B cell (primary cell): ENCODE measurements at regions of chr7 and their contacts with region 1.

Region 1: GRCh38 chr7:47720141-47720906 is 138.4 kb upstream of the TNS3 start:
- DNase-seq: peak; percentile 45
- ATAC-seq: peak; percentile 12
- H3K4me3 ChIP-seq: no peak overlapping the region
- H3K4me3 Mint-ChIP-seq: peak overlapping the region; percentile 64
- H3K27ac ChIP-seq: peak overlapping the region in 1 of 2 donors; percentile 28
- H3K27ac Mint-ChIP-seq: peak overlapping the region; percentile 87
- H3K4me1 ChIP-seq: peaks cover 57 to 63% of the 10 kb centered on the region in 2 donors
- H3K4me1 Mint-ChIP-seq: peaks cover 71% of the 10 kb centered on the region
- H3K27me3 ChIP-seq: no peaks in the 10 kb centered on the region
- H3K27me3 Mint-ChIP-seq: no peaks in the 10 kb centered on the region
- CTCF ChIP-seq: no peak

Region 2: DNA sequence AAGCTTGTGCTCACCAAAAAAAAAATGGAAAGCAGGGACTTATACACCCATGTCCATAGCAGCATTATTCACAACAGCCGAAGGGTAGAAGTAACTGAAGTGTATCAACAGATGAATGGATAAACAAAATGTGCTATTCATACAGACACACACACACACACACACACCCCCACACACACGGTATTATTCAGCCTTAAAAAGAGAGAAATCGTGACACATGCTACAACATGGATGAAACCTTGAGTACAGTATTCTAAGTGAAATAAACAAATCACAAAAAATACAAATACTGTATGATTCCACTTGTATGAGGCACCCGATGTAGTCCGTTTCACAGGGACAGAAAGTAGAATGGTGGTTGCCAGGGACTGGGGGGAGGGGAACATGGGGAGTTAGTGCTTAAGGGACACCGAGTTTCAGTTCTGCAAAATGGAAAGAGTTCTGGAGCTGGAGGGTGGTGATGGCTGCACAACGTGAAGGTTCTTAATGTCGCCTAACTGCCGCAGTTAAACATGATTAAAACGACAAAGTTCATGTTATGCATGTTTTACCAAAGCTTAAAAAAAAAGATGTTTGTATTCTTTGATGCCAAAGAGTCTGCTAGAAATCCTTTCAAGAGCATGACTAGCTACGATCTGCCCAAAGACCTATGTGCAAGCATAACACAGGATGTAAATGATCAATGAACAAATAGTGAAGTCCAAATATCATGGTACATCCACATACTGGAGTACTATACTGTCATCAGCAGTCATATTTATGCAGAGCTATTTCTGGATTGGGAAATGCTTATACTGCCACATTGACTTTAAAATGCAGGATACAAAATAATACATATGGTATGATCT is 145.6 kb before region 1 on chr7:
- CTCF ChIA-PET with region 1: no interaction called
- POLR2A ChIA-PET with region 1: interaction called, 9 read pairs
- intact Hi-C with region 1: loop called (anchors 1 kb)
- DNase-seq: peak; percentile 86
- ATAC-seq: peak; percentile 81
- H3K4me3 ChIP-seq: peak overlapping the region in 3 of 5 experiments; percentile 7 to 35 (median 27)
- H3K4me3 Mint-ChIP-seq: peak overlapping the region; percentile 71
- H3K27ac ChIP-seq: no peak overlapping the region
- H3K27ac Mint-ChIP-seq: peak overlapping the region; percentile 83
- H3K4me1 ChIP-seq: peaks cover 78 to 96% of the 10 kb centered on the region in 2 donors
- H3K4me1 Mint-ChIP-seq: peaks cover 92% of the 10 kb centered on the region
- H3K27me3 ChIP-seq: no peaks in the 10 kb centered on the region
- H3K27me3 Mint-ChIP-seq: no peaks in the 10 kb centered on the region
- CTCF ChIP-seq: no peak

Region 3: DNA sequence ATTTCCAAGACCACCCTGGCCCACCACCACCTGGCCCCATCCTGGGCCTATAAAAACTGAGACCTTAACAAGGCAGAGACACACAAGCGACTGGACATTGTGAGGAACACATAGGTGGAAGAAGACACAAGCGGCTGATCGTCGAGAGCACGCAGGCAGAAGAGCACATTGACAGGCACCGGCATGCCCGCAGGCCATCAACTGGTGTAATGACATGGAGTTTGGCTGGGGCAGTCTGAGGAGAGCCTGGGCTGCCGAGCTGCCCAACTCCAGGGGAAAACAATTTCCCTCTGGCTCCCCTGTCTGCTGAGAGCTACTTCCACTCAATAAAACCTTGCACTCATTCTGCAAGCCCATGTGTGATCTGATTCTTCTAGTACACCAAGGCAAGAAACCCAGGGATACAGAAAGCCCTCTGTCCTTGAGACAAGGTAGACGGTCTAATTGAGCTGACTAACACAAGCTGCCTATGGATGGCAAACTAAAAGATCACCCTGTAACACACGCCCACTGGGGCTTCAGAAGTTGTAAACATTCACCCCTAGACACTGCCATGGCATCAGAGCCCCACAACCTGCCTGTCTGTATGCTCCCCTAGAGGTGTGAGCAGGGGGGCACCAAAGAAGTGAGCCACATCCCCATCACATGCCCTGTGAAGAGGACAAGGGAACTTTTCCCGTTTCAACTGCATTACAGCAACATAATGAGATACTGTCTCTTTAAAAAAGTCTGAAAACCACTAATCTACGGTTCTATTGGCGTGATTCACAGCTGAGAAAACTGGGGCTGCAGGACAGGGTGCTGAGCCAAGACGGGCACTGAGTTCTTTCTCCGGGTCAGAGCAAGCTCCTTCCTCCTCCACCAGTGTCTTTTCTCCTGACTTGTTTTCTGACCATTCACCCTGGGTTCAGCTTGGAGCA is 119.9 kb before region 1 on chr7:
- CTCF ChIA-PET with region 1: interaction called, 3 read pairs
- POLR2A ChIA-PET with region 1: no interaction called
- intact Hi-C with region 1: loop called (anchors 10 kb)
- DNase-seq: no peak
- ATAC-seq: peak; percentile 61
- H3K4me3 ChIP-seq: peak overlapping the region in 4 of 5 experiments; percentile 7 to 46 (median 13)
- H3K4me3 Mint-ChIP-seq: peak overlapping the region; percentile 74
- H3K27ac ChIP-seq: peak overlapping the region; percentile 57 to 63
- H3K27ac Mint-ChIP-seq: peak overlapping the region; percentile 88
- H3K4me1 ChIP-seq: peaks cover 30 to 38% of the 10 kb centered on the region in 2 donors
- H3K4me1 Mint-ChIP-seq: peaks cover 49% of the 10 kb centered on the region
- H3K27me3 ChIP-seq: no peaks in the 10 kb centered on the region
- H3K27me3 Mint-ChIP-seq: no peaks in the 10 kb centered on the region
- CTCF ChIP-seq: no peak

Region 4: DNA sequence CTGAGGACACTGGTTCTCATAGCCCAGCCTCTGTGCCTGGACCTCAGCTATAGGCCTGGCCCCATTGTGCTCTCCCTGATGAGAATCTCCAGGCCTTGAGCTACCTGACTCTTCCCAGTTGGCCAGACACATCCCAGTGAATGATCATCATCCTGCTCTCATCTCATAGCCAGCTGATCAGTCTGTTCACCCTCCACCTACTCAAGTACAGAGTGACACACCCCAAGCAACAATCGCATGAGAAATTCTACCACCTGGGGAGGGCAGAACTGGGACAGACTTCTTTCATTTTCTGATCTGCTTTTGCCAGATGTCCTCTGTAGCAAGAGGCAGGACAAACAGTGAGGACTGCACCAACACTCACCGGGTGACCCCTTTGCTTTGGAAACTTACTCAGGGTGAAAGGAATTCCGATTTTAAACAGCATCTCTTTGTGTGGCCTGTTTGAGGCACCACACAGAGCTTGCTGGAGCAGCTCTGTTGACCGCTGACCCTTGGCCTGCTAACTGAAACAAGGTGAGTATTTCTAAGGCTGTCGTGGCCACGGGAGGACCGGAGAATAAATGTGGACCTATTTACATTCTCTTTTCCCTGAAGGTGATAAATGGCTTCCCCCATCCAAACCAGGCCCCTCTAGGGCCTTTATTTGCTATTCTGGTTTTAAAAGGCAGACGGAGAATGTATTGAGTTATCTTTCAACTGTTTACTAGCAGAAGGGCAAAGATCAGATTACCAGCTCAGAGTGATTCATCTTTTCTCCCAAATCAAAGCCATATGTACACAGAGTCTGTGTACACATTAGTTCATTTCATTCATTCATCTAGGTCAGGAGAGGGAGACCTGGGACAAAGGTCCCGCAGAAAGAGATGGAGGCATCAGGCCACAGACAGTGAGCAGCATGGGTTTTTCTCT is 43.0 kb after region 1 on chr7:
- CTCF ChIA-PET with region 1: interaction called, 6 read pairs
- POLR2A ChIA-PET with region 1: no interaction called
- intact Hi-C with region 1: loop called (anchors 5 kb)
- DNase-seq: peak; percentile 32
- ATAC-seq: peak; percentile 91
- H3K4me3 ChIP-seq: peak overlapping the region in 2 of 5 experiments; percentile 16 to 21
- H3K4me3 Mint-ChIP-seq: peak overlapping the region; percentile 75
- H3K27ac ChIP-seq: peak overlapping the region; percentile 44 to 53
- H3K27ac Mint-ChIP-seq: peak overlapping the region; percentile 90
- H3K4me1 ChIP-seq: peaks cover 11% of the 10 kb centered on the region in 2 donors
- H3K4me1 Mint-ChIP-seq: peaks cover 45% of the 10 kb centered on the region
- H3K27me3 ChIP-seq: no peaks in the 10 kb centered on the region
- H3K27me3 Mint-ChIP-seq: no peaks in the 10 kb centered on the region
- CTCF ChIP-seq: no peak